Naive thymus-derived CD4-positive, alpha-beta T cell (primary cell): ENCODE measurements at regions of chrX and their contacts with region 1.

Region 1: DNA sequence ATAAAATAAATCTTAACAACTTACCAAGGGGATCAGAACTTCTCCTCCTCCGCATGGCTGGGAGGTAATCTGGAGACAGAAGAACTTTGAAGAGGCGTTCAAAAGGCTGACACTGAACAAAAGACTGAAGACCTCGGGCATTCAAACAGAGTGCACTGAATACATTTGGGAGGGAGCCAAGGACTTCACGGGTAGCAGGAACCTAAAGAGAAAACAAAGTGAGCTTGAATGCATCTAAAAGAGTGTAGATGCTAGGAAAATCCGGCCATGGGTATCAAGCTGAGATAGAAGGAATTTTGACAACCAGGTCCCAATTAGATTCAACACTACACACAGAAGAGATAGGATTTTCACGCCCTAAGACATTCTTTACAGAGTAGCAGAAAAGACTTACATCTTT is 69.6 kb downstream of the HUWE1 start:
- DNase-seq: no peak
- ATAC-seq: no peak
- H3K4me3 ChIP-seq: no peak overlapping the region
- H3K4me3 Mint-ChIP-seq: no peak overlapping the region
- H3K27ac ChIP-seq: no peak overlapping the region
- H3K27ac Mint-ChIP-seq: peak overlapping the region in 1 of 9 donors; percentile 45
- H3K4me1 ChIP-seq: no peaks in the 10 kb centered on the region
- H3K4me1 Mint-ChIP-seq: peaks cover 0 to 14% (median 4%) of the 10 kb centered on the region in 7 donors
- H3K27me3 ChIP-seq: no peaks in the 10 kb centered on the region
- H3K27me3 Mint-ChIP-seq: no peaks in the 10 kb centered on the region

Region 2: GRCh38 chrX:53563324-53563723 is 53.6 kb before region 1 on chrX:
- CTCF ChIA-PET with region 1: no interaction called
- POLR2A ChIA-PET with region 1: no interaction called
- intact Hi-C with region 1: loop called in 1 of 2 experiments (anchors 10 kb)
- DNase-seq: no peak
- ATAC-seq: no peak
- H3K4me3 ChIP-seq: no peak overlapping the region
- H3K4me3 Mint-ChIP-seq: no peak overlapping the region
- H3K27ac ChIP-seq: no peak overlapping the region
- H3K27ac Mint-ChIP-seq: no peak overlapping the region
- H3K4me1 ChIP-seq: no peaks in the 10 kb centered on the region
- H3K4me1 Mint-ChIP-seq: peaks cover 0 to 5% (median 0%) of the 10 kb centered on the region in 7 donors
- H3K27me3 ChIP-seq: no peaks in the 10 kb centered on the region
- H3K27me3 Mint-ChIP-seq: no peaks in the 10 kb centered on the region